Mammary epithelial cell (primary cell): ENCODE measurements at regions of chr11 and their contacts with region 1.

Region 1: DNA sequence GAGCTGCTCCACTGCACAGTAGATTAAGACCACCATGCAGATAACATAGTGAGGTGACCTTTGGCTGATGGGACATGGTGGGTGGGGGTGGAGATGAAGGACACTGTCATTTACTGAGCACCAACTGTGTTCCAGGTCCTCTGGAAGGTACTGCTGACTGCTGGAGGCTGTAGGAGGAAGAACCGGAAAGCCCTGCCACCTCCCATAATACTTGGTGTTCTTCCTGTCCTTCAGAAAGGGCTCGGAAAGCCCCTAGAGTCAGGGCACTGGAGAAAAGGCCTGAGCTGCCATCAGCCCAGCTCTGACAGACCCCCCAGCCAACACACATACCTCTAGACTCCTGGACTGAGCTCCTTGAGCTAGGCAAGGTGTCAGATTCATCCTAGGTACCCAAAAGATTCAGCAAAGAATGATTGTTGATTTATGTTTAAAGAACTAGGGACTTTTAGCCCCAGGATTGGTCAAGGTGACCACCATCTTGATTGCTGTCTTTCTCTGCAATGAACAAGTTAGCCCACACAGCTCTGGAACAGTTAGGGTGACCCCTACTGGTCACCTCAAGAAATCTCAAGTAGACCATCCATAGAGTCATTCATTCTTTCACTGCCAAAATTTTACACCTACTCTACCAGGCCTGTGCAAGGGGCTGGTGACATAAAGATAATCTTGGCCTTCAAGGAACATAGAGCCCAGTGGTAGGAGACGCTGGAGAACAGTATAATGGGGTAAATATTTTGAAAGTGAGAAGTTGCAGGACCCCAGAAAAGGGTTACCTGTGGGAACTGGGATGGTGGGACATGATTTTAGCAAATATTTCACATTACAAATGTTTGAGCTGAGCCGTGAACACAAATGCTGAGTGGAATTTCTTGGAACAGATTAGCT is 39.4 kb downstream of the IRAG1 start:
- DNase-seq: peak; percentile 55
- H3K4me3 ChIP-seq: no peak overlapping the region
- H3K27ac ChIP-seq: no peak overlapping the region
- H3K4me1 ChIP-seq: peaks cover 25% of the 10 kb centered on the region
- H3K27me3 ChIP-seq: no peaks in the 10 kb centered on the region
- CTCF ChIP-seq: peak; percentile 65 to 74

Region 2: GRCh38 chr11:10526974-10527918 is 126.9 kb before region 1 on chr11:
- CTCF ChIA-PET with region 1: no interaction called
- dilution Hi-C with region 1: no loop called
- in situ Hi-C with region 1: loop called in 1 of 2 experiments (anchors 10 kb)
- intact Hi-C with region 1: no loop called
- DNase-seq: peak; percentile 69
- H3K4me3 ChIP-seq: no peak overlapping the region
- H3K27ac ChIP-seq: peak overlapping the region; percentile 39
- H3K4me1 ChIP-seq: peaks cover 12% of the 10 kb centered on the region
- H3K27me3 ChIP-seq: no peaks in the 10 kb centered on the region
- CTCF ChIP-seq: no peak

Region 3: DNA sequence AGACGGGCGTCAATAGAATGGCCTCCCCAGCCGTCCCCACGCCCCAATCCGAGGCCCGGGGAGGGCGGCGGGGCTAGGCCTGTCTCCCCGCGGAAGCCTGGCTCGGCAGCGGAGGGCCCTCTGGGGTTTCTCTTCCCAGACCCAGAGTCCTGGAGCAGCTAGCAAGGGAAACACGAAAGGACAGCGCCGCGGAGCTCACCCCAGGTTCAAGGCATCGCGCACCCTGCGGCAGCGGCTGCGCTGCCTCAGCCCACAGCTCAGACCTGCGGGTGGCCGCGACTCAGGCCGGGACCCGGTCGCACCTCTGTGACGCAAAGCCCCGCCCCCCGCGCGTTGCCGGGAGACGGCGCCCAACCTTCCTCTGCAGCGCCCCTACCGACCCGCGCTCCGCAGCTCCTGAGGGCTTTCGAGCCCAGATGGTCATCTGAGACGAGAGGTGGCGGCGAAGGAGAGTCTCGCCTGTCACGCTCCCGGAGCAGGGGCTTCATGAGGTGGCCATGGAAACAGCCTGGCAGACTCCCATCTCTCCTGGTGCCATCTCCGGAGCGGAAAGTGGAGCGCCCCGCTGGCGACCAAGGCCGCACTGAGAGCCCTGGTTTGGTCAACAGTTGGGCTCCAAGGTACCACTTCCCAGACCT is 113.1 kb before region 1 on chr11 and contains the start of gene RNF141:
- CTCF ChIA-PET with region 1: no interaction called
- dilution Hi-C with region 1: no loop called
- in situ Hi-C with region 1: no loop called
- intact Hi-C with region 1: loop called (anchors 1 kb)
- DNase-seq: peak; percentile 91
- H3K4me3 ChIP-seq: peak within 1 kb of the TSS; percentile 64 to 89 (median 72)
- H3K27ac ChIP-seq: peak within 1 kb of the TSS; percentile 85
- H3K4me1 ChIP-seq: peaks cover 9% of the 10 kb centered on the region
- H3K27me3 ChIP-seq: no peaks in the 10 kb centered on the region
- CTCF ChIP-seq: peak; percentile 69 to 91
- total RNA-seq, gene RNF141: 45.7 to 58.2 TPM

Region 4: DNA sequence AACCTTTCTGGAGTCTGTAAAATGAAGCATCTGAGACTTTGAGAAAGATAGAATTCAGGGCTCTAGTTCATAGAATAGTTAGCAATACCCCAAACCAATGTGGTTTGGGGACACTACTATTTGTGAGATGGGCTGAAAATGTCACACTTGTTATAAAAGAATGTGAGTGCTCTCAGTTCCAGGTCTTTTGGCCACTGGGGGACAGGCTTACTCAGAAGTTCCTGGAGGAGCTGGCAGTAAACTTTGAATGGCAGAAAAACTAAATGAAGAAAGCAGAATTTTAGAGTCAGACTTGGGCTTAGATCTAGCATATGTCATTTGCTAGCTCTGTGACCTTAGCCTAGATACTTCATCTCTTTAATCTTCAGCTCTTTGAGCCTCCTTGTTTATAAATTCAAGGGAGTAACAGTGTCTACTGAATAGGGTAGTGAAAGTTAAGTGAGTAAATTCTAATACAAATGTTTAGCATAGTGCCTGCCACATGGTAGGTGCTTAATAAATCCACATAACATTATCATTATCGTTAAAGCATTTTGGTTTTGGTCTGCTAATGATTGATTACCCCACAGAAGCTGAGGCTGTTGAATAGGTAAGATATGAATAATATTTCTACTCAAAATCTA is 89.4 kb before region 1 on chr11:
- CTCF ChIA-PET with region 1: no interaction called
- dilution Hi-C with region 1: no loop called
- in situ Hi-C with region 1: no loop called
- intact Hi-C with region 1: loop called (anchors 1 kb)
- DNase-seq: no peak
- H3K4me3 ChIP-seq: no peak overlapping the region
- H3K27ac ChIP-seq: no peak overlapping the region
- H3K4me1 ChIP-seq: no peaks in the 10 kb centered on the region
- H3K27me3 ChIP-seq: no peaks in the 10 kb centered on the region
- CTCF ChIP-seq: peak; percentile 31 to 58

Region 5: DNA sequence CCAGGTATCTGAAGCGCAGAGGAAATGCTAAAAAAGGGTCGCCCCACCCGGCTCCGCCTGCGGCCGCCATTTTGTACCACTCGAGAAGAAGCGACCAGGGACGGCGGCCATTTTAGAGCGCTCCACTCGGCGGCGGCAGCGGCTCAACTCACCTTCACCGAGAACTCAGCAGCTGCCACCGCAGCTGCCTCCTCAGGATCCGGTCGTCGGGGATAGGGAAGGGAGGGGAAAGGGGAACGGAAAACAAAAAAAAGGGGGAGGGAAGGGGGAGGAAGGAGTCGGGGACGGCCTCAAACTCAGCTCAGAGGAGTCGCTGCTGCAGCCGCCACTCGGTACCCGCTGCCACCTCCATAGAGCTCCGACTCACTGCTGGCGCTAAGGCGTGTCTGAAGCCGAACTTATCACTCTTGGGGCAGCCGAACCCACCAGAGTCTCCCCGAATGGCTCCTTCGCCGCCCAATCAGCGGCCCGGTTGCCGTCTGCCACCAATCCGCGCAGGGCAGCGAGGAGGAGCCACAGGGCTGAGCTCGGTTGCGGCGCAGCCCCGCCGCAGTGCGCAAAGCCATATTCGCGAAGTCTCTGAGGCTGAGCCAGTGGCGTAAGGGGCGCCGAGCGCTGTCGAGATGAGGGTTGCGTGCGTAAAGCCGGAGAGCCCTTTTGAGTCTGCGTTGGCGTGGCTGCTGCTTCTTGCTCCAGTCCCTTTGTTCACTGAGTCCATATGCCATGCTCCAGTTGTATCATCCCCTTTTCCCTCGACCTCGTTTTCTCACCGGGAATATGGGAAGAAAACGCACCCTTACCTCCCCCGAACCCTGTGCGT is 154.6 kb after region 1 on chr11 and contains the start of gene EIF4G2:
- CTCF ChIA-PET with region 1: no interaction called
- dilution Hi-C with region 1: no loop called
- in situ Hi-C with region 1: no loop called
- intact Hi-C with region 1: no loop called
- DNase-seq: peak; percentile 99
- H3K4me3 ChIP-seq: peak within 1 kb of the TSS; percentile 64 to 89 (median 86)
- H3K27ac ChIP-seq: peak within 1 kb of the TSS; percentile 83
- H3K4me1 ChIP-seq: peaks cover 23% of the 10 kb centered on the region
- H3K27me3 ChIP-seq: no peaks in the 10 kb centered on the region
- CTCF ChIP-seq: no peak
- total RNA-seq, gene EIF4G2: 737 to 956 TPM